Psoas muscle (tissue), 8 donors: ENCODE measurements at regions of chr19 and their contacts with region 1.

Region 1: GRCh38 chr19:10269333-10270179 is 1.4 kb upstream of the ICAM1 start:
- DNase-seq: peak; percentile 86 to 90
- ATAC-seq: peak; percentile 75 to 89 (median 82)
- H3K4me3 ChIP-seq: peak overlapping the region; percentile 66
- H3K27ac ChIP-seq: peak overlapping the region; percentile 72
- H3K4me1 ChIP-seq: peaks cover 16% of the 10 kb centered on the region
- H3K27me3 ChIP-seq: peaks cover 0 to 22% (median 1%) of the 10 kb centered on the region in 3 donors
- CTCF ChIP-seq: peak; percentile 90

Region 2: DNA sequence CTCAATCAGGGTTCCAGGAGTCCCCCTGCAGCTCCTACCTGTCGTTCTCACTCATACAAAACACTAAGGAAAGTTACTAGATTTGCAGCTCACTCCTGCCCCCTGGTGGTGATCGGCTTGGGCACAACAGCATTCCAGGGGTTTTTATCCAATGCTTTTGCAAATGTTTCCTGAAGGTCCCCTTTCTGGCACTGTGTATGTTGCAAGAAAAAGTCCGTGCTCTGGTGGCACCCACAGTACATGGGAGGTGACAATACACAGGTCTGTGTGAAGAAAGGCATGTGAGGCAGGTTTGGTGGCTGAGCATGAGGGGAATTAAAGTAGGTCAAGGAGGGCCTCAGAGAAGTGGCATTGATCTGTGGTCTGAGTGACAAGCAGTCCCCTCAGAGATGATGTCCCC is 119.4 kb after region 1 on chr19:
- intact Hi-C with region 1: loop called (anchors 1 to 2 kb)
- DNase-seq: peak; percentile 87 to 91
- ATAC-seq: peak; percentile 64 to 80 (median 76)
- H3K4me3 ChIP-seq: no peak overlapping the region
- H3K27ac ChIP-seq: no peak overlapping the region
- H3K4me1 ChIP-seq: no peaks in the 10 kb centered on the region
- H3K27me3 ChIP-seq: no peaks in the 10 kb centered on the region
- CTCF ChIP-seq: peak; percentile 93

Region 3: DNA sequence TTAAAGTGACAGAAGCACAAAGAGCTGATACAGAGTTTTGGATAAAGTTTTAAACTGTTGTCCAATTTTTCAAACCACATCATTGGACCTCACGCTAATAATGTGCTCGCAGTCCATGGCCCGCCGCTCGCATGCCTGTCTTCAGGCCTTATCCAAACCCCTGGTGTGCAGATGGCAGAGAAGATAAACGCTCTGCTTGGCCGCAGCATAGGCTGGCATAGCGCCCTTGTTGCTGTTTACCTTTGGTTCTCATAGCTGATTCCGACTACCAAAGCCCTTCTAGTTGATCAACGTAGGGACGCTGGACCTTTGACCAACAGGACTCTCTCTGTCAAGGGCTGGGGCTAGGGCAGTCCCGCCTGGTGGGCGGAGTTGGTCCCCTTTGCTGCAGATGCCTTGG is 408.2 kb after region 1 on chr19:
- intact Hi-C with region 1: no loop called
- DNase-seq: no peak
- ATAC-seq: no peak
- H3K4me3 ChIP-seq: no peak overlapping the region
- H3K27ac ChIP-seq: no peak overlapping the region
- H3K4me1 ChIP-seq: peaks cover 7% of the 10 kb centered on the region
- H3K27me3 ChIP-seq: no peaks in the 10 kb centered on the region
- CTCF ChIP-seq: no peak